T-cell (primary cell): ENCODE measurements at regions of chr6 and their contacts with region 1.

Region 1: GRCh38 chr6:119110601-119111548 is 32.4 kb upstream of the FAM184A start:
- DNase-seq: peak in 28 of 35 experiments; percentile 5 to 81 (median 32)
- ATAC-seq: peak; percentile 83 to 86 (median 85)
- H3K4me3 ChIP-seq: no peak overlapping the region
- H3K4me3 Mint-ChIP-seq: no peak overlapping the region
- H3K27ac ChIP-seq: no peak overlapping the region
- H3K27ac Mint-ChIP-seq: peak overlapping the region in 1 of 2 donors; percentile 12
- H3K4me1 ChIP-seq: no peaks in the 10 kb centered on the region
- H3K4me1 Mint-ChIP-seq: peaks cover 11 to 18% (median 11%) of the 10 kb centered on the region in 3 donors
- H3K27me3 ChIP-seq: no peaks in the 10 kb centered on the region
- H3K27me3 Mint-ChIP-seq: peaks cover 0 to 3% of the 10 kb centered on the region in 2 donors

Region 2: DNA sequence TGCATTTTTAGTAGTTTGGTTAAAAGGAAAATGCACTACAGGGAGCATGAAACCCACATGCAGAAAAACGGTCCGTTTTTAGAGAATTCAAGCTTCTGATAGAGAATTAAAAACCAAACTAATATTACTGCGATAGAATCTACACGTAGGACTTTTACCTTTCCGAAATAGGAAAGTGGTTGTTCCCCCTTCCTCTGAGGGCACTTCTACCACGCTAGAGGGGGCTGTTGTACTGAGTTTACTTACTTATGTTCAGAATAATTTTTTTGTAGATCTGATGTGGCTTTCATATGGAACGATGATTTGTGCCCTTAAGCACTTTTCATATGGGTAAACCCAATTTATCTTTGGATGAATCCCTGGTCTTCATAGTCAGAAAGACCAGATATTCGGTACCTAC is 827.1 kb before region 1 on chr6:
- CTCF ChIA-PET with region 1: interaction called, 6 to 13 read pairs
- POLR2A ChIA-PET with region 1: no interaction called
- DNase-seq: peak in 33 of 35 experiments; percentile 6 to 74 (median 30)
- ATAC-seq: peak; percentile 39 to 64 (median 55)
- H3K4me3 ChIP-seq: no peak overlapping the region
- H3K4me3 Mint-ChIP-seq: no peak overlapping the region
- H3K27ac ChIP-seq: no peak overlapping the region
- H3K27ac Mint-ChIP-seq: no peak overlapping the region
- H3K4me1 ChIP-seq: no peaks in the 10 kb centered on the region
- H3K4me1 Mint-ChIP-seq: peaks cover 0 to 2% (median 0%) of the 10 kb centered on the region in 3 donors
- H3K27me3 ChIP-seq: no peaks in the 10 kb centered on the region
- H3K27me3 Mint-ChIP-seq: peaks cover 10 to 17% of the 10 kb centered on the region in 2 donors

Region 3: DNA sequence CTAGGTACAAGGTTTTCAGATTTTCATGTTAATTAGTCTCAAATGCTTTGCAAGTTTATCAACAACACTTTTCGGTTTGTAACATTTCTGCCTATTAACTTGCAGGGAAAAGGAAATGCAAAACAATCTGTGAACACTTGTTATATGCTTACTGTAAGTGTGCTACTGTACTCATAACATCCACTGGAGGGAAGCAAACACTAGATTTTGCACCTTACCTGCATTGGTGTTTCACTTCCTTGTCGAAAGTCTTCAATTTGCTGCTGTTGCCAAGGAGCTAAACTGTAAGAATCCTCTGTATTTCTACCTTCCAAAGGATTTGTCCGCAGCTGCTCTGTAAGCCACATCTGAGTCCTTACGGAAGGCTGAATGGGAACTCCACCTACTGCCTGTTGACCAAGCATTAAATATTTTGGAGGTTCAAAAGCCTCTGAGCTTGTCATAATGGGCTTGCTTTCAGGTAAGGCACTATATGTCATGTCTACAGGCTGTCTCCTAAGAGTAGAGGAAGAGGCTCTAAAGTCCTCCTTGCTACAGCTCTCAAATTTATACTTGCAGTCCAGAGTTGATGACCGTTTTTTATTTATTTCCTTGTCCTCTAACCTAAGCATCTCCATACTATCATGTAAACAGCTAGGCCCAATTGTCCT is 545.4 kb before region 1 on chr6:
- CTCF ChIA-PET with region 1: interaction called, 3 to 26 read pairs
- POLR2A ChIA-PET with region 1: no interaction called
- DNase-seq: peak in 16 of 35 experiments; percentile 4 to 77 (median 19)
- ATAC-seq: peak; percentile 88 to 97 (median 94)
- H3K4me3 ChIP-seq: no peak overlapping the region
- H3K4me3 Mint-ChIP-seq: no peak overlapping the region
- H3K27ac ChIP-seq: peak overlapping the region; percentile 48
- H3K27ac Mint-ChIP-seq: peak overlapping the region; percentile 62 to 83
- H3K4me1 ChIP-seq: peaks cover 0 to 2% of the 10 kb centered on the region in 2 experiments
- H3K4me1 Mint-ChIP-seq: peaks cover 42 to 51% (median 50%) of the 10 kb centered on the region in 3 donors
- H3K27me3 ChIP-seq: no peaks in the 10 kb centered on the region
- H3K27me3 Mint-ChIP-seq: no peaks in the 10 kb centered on the region

Region 4: DNA sequence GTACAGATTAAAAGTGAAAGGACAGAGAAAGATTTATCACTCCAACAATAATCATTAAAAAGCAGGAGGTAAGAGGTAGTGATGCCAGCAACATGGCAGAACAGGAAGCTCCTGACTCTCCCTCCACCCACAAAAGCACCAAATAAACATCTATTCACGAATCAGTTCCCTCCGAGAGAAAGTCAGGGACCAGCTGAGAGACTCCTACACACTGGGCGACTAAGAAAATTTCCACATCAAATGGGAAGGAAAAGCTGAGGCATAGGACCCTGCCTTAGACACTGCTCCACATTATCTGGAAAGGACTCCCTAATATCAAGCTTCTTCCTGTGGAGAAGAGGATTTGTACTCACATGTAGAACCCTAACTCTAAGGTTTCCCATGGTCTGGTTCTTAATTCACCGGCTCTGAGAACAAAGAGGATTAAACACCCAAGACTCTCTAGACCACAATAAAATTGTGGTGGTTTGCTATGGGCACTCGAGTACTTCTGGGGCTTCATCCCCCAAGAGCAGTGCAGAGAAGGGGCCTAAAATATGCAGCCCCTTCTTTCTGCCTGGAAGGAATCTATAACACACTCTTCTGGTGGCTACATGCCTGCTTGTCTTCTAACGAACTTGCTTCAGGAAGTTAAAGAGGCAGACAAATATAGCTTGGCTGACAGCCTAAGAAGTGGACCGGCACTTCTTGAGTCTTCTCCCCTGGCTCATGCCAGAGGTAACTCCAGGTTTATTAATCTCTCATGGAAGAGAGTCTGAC is 246.4 kb before region 1 on chr6:
- CTCF ChIA-PET with region 1: no interaction called
- POLR2A ChIA-PET with region 1: no interaction called
- DNase-seq: no peak
- ATAC-seq: peak in 3 of 4 experiments; percentile 56 to 68 (median 61)
- H3K4me3 ChIP-seq: no peak overlapping the region
- H3K4me3 Mint-ChIP-seq: peak overlapping the region; percentile 61 to 66 (median 62)
- H3K27ac ChIP-seq: no peak overlapping the region
- H3K27ac Mint-ChIP-seq: peak overlapping the region; percentile 74 to 89
- H3K4me1 ChIP-seq: peaks cover 2 to 12% of the 10 kb centered on the region in 2 experiments
- H3K4me1 Mint-ChIP-seq: peaks cover 49 to 59% (median 59%) of the 10 kb centered on the region in 3 donors
- H3K27me3 ChIP-seq: no peaks in the 10 kb centered on the region
- H3K27me3 Mint-ChIP-seq: no peaks in the 10 kb centered on the region

Region 5: GRCh38 chr6:118963003-118963402 is 147.9 kb before region 1 on chr6:
- CTCF ChIA-PET with region 1: interaction called, 42 to 111 read pairs
- POLR2A ChIA-PET with region 1: no interaction called
- DNase-seq: peak in 1 of 35 experiments; percentile 19
- ATAC-seq: no peak
- H3K4me3 ChIP-seq: no peak overlapping the region
- H3K4me3 Mint-ChIP-seq: no peak overlapping the region
- H3K27ac ChIP-seq: no peak overlapping the region
- H3K27ac Mint-ChIP-seq: no peak overlapping the region
- H3K4me1 ChIP-seq: no peaks in the 10 kb centered on the region
- H3K4me1 Mint-ChIP-seq: peaks cover 0 to 4% (median 2%) of the 10 kb centered on the region in 3 donors
- H3K27me3 ChIP-seq: no peaks in the 10 kb centered on the region
- H3K27me3 Mint-ChIP-seq: no peaks in the 10 kb centered on the region

Region 6: GRCh38 chr6:118968416-118968815 is 142.5 kb before region 1 on chr6:
- CTCF ChIA-PET with region 1: interaction called, 42 to 111 read pairs
- POLR2A ChIA-PET with region 1: interaction called in 1 of 2 experiments, 4 read pairs
- DNase-seq: peak in 1 of 35 experiments; percentile 33
- ATAC-seq: no peak
- H3K4me3 ChIP-seq: no peak overlapping the region
- H3K4me3 Mint-ChIP-seq: no peak overlapping the region
- H3K27ac ChIP-seq: no peak overlapping the region
- H3K27ac Mint-ChIP-seq: no peak overlapping the region
- H3K4me1 ChIP-seq: no peaks in the 10 kb centered on the region
- H3K4me1 Mint-ChIP-seq: no peaks in the 10 kb centered on the region
- H3K27me3 ChIP-seq: no peaks in the 10 kb centered on the region
- H3K27me3 Mint-ChIP-seq: no peaks in the 10 kb centered on the region

Region 7: DNA sequence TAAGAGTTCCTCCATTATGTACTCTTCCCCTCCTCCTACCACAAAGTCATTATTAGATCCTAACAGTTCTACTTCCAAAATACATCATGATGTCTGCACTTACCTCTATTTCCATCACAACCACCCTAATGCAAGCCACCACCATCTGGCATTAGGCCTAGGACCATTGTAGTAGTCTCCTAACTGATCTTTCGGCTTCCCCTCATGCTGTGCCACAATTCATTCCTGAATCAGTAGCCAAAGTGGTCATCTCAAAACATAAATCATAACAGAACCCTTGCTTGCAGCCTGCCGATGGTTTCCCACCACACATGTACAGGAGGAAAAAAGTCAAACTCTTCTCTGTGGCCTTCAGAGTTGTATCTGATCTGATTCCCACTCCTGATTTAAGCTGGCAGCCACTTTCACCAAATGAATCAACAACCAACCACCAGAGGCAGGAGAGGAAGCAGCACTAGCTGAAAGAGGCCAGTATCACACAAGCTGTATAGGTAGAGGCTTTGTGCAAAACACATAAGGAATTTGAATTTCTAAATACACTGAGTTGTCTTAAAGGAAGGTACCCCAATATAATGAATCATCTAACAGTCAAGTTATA is 58.5 kb before region 1 on chr6:
- CTCF ChIA-PET with region 1: interaction called in 1 of 2 experiments, 11 read pairs
- POLR2A ChIA-PET with region 1: no interaction called
- DNase-seq: peak in 1 of 35 experiments; percentile 21
- ATAC-seq: peak; percentile 34 to 62 (median 47)
- H3K4me3 ChIP-seq: no peak overlapping the region
- H3K4me3 Mint-ChIP-seq: no peak overlapping the region
- H3K27ac ChIP-seq: no peak overlapping the region
- H3K27ac Mint-ChIP-seq: peak overlapping the region; percentile 11 to 17
- H3K4me1 ChIP-seq: no peaks in the 10 kb centered on the region
- H3K4me1 Mint-ChIP-seq: peaks cover 11 to 23% (median 13%) of the 10 kb centered on the region in 3 donors
- H3K27me3 ChIP-seq: no peaks in the 10 kb centered on the region
- H3K27me3 Mint-ChIP-seq: no peaks in the 10 kb centered on the region

Region 8: DNA sequence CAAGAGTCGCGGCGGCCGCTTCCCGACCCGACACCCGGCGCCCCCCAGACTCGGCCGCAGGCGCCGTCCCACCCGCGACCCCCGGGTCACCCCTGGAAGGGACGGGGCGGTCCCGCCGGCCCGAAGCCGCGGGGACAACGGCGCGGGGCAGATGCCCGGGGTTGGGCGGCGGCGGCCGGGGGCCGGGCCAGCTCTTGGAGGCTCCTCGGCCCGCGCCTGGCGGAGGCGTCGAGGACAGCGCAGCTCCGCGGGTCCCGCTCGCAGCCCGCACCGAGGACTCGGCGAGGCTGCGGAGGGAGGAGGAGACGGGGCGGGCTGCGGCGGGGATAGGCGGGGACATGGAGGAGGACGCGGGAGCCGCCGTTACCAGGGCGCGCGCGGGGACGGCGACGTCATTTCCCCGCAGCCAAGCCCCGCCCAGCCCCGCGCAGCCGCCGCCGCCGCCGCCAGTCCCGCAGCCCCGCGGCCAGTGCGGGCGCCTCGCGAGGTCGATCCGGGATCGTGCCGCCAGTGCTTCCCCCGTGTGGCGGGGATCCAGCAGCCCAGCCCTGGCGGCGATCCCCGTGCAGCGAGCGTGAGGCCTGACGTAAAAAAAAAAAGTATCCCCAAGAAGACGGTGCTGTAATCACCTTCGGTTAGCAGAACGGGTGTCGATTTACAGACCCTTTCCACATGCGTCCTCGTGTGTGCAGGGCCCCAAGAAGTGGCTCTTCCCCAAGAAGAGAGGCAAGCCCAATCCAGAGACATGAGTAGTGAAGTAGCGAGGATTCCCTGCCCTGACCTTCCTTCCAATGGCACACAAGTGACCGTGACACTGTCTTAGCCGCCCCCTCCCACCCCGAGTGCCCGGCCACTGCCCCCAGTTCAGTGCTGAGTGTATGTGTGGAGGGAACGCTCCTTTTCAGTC is 32.2 kb before region 1 on chr6 and contains the start of gene FAM184A:
- CTCF ChIA-PET with region 1: interaction called in 1 of 2 experiments, 15 read pairs
- POLR2A ChIA-PET with region 1: interaction called in 1 of 2 experiments, 3 read pairs
- DNase-seq: peak; percentile 38 to 85 (median 69)
- ATAC-seq: peak; percentile 69 to 79 (median 78)
- H3K4me3 ChIP-seq: peak within 1 kb of the TSS; percentile 73 to 82
- H3K4me3 Mint-ChIP-seq: peak within 1 kb of the TSS; percentile 68 to 91 (median 87)
- H3K27ac ChIP-seq: peak within 1 kb of the TSS; percentile 65
- H3K27ac Mint-ChIP-seq: peak within 1 kb of the TSS; percentile 84 to 91
- H3K4me1 ChIP-seq: peaks cover 18 to 23% of the 10 kb centered on the region in 2 experiments
- H3K4me1 Mint-ChIP-seq: peaks cover 38 to 44% (median 43%) of the 10 kb centered on the region in 3 donors
- H3K27me3 ChIP-seq: no peaks in the 10 kb centered on the region
- H3K27me3 Mint-ChIP-seq: no peaks in the 10 kb centered on the region
- total RNA-seq, gene FAM184A: 3.6 to 6.4 (median 5.1) TPM

Region 9: GRCh38 chr6:119162134-119162775 is 51.4 kb after region 1 on chr6:
- CTCF ChIA-PET with region 1: no interaction called
- POLR2A ChIA-PET with region 1: no interaction called
- DNase-seq: no peak
- ATAC-seq: no peak
- H3K4me3 ChIP-seq: no peak overlapping the region
- H3K4me3 Mint-ChIP-seq: no peak overlapping the region
- H3K27ac ChIP-seq: no peak overlapping the region
- H3K27ac Mint-ChIP-seq: no peak overlapping the region
- H3K4me1 ChIP-seq: no peaks in the 10 kb centered on the region
- H3K4me1 Mint-ChIP-seq: no peaks in the 10 kb centered on the region
- H3K27me3 ChIP-seq: peaks cover 0 to 18% of the 10 kb centered on the region in 2 experiments
- H3K27me3 Mint-ChIP-seq: peaks cover 28 to 34% of the 10 kb centered on the region in 2 donors